H1 (cell line): ENCODE measurements at regions of chr2 and their contacts with region 1.

Region 1: GRCh38 chr2:177056481-177056929 is 156.1 kb upstream of the HNRNPA3 start:
- DNase-seq: no peak
- H3K4me3 ChIP-seq: no peak overlapping the region
- H3K27ac ChIP-seq: no peak overlapping the region
- H3K4me1 ChIP-seq: no peaks in the 10 kb centered on the region
- H3K27me3 ChIP-seq: no peaks in the 10 kb centered on the region
- CTCF ChIP-seq: peak; percentile 45 to 68 (median 49)
- EP300 ChIP-seq: no peak
- POLR2A ChIP-seq: no peak
- RAD21 ChIP-seq: peak; percentile 49 to 57

Region 2: DNA sequence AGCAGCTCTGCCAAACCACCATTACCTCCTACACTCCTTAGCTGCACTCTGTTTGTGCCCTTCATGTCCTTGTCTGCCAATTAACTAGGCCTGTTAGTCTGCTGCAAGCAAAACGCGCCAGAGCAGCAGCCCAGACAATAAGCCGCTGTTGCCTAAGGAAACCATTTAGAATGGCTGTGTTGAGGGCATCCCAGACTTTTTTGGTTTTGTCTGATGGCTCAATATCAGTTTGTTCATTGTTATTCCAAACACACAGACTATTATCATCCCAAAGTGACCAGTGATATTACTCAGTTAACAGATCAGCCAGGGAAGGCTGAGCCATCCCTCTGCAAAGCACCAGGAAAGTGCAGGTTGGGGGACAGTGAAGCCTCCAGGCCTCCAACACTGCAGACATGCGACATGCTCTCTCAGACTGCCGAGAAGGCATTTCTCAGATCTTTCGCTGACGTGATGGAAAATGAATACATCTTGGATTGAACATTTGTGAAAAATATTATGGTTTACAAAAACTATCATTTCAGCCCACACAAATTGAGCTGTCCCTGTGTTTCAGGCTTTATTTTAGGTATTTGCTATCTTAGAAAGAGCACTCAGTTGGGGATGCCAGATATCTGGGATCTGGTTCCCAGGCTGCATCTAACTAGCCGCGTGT is 25.9 kb before region 1 on chr2:
- CTCF ChIA-PET with region 1: interaction called, 15 read pairs
- POLR2A ChIA-PET with region 1: interaction called, 3 read pairs
- DNase-seq: no peak
- H3K4me3 ChIP-seq: no peak overlapping the region
- H3K27ac ChIP-seq: no peak overlapping the region
- H3K4me1 ChIP-seq: peaks cover 0 to 9% (median 0%) of the 10 kb centered on the region in 4 experiments; a peak in 1 of 7 replicates
- H3K27me3 ChIP-seq: no peaks in the 10 kb centered on the region
- CTCF ChIP-seq: no peak
- EP300 ChIP-seq: no peak
- POLR2A ChIP-seq: no peak
- RAD21 ChIP-seq: no peak

Region 3: GRCh38 chr2:177044671-177045070 is 11.8 kb before region 1 on chr2:
- CTCF ChIA-PET with region 1: interaction called, 28 read pairs
- POLR2A ChIA-PET with region 1: no interaction called
- DNase-seq: no peak
- H3K4me3 ChIP-seq: no peak overlapping the region
- H3K27ac ChIP-seq: no peak overlapping the region
- H3K4me1 ChIP-seq: no peaks in the 10 kb centered on the region
- H3K27me3 ChIP-seq: peaks cover 0 to 1% (median 0%) of the 10 kb centered on the region in 4 experiments; a peak in 1 of 7 replicates
- CTCF ChIP-seq: no peak
- EP300 ChIP-seq: no peak
- POLR2A ChIP-seq: no peak
- RAD21 ChIP-seq: no peak

Region 4: DNA sequence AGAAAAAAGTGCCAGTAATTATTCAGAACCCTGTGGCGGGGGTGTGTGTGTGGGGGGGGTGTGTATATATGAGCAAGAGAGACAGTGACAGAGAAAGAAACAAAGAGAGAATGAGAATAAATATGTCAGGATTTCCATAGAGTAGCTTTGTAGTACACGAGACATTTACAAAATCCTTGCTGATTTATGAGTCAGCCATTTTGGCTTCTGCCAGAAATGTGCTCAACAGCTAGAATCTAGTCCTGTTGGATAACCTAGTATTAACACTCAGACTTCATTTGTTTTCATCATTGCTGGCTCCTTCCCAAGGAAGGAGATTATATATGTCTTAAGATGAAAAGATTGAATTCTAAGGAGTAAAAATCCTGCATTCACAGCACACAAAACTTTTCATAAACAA is 15.6 kb after region 1 on chr2:
- CTCF ChIA-PET with region 1: interaction called, 10 read pairs
- POLR2A ChIA-PET with region 1: no interaction called
- DNase-seq: no peak
- H3K4me3 ChIP-seq: no peak overlapping the region
- H3K27ac ChIP-seq: no peak overlapping the region
- H3K4me1 ChIP-seq: peaks cover 0 to 4% (median 2%) of the 10 kb centered on the region in 4 experiments; a peak in 3 of 7 replicates
- H3K27me3 ChIP-seq: no peaks in the 10 kb centered on the region
- CTCF ChIP-seq: no peak
- EP300 ChIP-seq: no peak
- POLR2A ChIP-seq: no peak
- RAD21 ChIP-seq: no peak

Region 5: GRCh38 chr2:177106212-177106611 is 49.7 kb after region 1 on chr2:
- CTCF ChIA-PET with region 1: no interaction called
- POLR2A ChIA-PET with region 1: no interaction called
- DNase-seq: no peak
- H3K4me3 ChIP-seq: no peak overlapping the region
- H3K27ac ChIP-seq: no peak overlapping the region
- H3K4me1 ChIP-seq: no peaks in the 10 kb centered on the region
- H3K27me3 ChIP-seq: no peaks in the 10 kb centered on the region
- CTCF ChIP-seq: peak; percentile 35 to 81 (median 48); a peak in 3 of 4 replicates
- EP300 ChIP-seq: no peak
- POLR2A ChIP-seq: no peak
- RAD21 ChIP-seq: peak; percentile 46 to 49

Region 6: DNA sequence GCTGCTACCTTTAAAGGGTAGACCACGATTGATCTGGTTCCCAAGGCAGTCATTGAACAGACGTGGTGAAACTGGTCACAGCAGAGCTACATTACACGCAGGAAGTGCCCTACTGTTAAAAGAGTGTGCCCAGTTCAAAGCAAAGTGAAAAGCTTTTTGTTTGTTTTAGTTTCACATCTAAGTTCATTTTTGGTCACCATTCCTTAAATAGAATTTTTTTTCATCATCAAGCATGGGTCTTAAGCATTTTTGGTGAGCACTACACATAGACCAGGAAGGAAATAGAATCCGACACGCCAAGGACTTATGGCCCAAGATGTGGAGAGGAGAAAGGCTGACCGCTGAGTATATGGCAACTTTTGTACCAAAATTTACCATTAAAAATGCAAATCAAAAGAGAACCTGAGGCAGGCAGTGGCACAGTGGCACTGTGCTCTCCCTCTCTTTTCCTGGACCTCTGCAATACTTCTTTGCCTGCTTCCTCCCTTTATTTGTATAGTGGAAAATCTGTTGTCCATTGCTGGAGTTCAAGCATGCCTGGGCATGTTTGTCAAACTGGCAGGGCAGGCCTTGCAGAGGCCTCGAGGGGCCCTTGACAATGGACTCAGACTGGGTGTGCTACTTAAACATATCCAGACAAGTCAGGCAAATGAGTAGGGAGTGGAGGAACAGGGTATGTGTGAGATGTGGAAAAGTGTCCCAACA is 113.5 kb after region 1 on chr2:
- CTCF ChIA-PET with region 1: no interaction called
- POLR2A ChIA-PET with region 1: no interaction called
- DNase-seq: no peak
- H3K4me3 ChIP-seq: no peak overlapping the region
- H3K27ac ChIP-seq: 0 out of 2 replicates have a peak overlapping the region, but pooled peaks have one; percentile 21
- H3K4me1 ChIP-seq: peaks cover 1 to 7% (median 5%) of the 10 kb centered on the region in 4 experiments; a peak in 5 of 7 replicates
- H3K27me3 ChIP-seq: peaks cover 0 to 2% (median 0%) of the 10 kb centered on the region in 4 experiments; a peak in 1 of 7 replicates
- CTCF ChIP-seq: no peak
- EP300 ChIP-seq: no peak
- POLR2A ChIP-seq: no peak
- RAD21 ChIP-seq: no peak